ENCODE measurements at regions of chr21 and their contacts with region 1.

Region 1: GRCh38 chr21:34983680-34984086 is 65.4 kb downstream of the RUNX1 start:
- DNase-seq: peak; percentile 46
- H3K4me3 Mint-ChIP-seq: peak overlapping the region; percentile 49
- H3K27ac Mint-ChIP-seq: peak overlapping the region; percentile 80
- H3K4me1 Mint-ChIP-seq: peaks cover 76% of the 10 kb centered on the region
- H3K27me3 Mint-ChIP-seq: peaks cover 3% of the 10 kb centered on the region

Region 2: DNA sequence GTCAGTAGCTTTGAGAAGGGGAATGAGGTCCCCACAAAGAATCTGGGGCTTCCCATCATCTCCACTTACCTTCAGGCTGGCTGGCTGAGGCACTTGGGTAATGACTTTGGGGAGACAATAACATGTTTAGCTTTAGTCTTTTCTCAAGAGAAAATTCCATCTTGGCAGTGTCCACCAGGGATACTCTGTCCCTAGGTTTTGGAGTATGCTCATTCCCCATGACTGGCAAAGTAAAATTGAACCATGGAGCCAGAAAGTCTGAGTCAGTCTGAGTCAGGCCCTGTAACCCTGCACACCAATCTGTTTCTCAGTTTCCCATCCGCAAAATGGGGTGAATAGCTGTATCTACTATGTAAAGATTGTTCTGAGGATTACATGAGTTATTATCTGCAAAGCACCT is 37.2 kb after region 1 on chr21:
- CTCF ChIA-PET with region 1: interaction called, 10 read pairs
- POLR2A ChIA-PET with region 1: no interaction called
- DNase-seq: no peak
- H3K4me3 Mint-ChIP-seq: no peak overlapping the region
- H3K27ac Mint-ChIP-seq: no peak overlapping the region
- H3K4me1 Mint-ChIP-seq: peaks cover 74% of the 10 kb centered on the region
- H3K27me3 Mint-ChIP-seq: no peaks in the 10 kb centered on the region

Measured in activated CD4-positive, alpha-beta T cell treated with anti-CD3 and anti-CD28 coated beads, Interleukin-2, amount 10 ng/mL, durations not matched to agents 7 days and 5 days (primary cell).